Uterus (tissue), 4 donors: ENCODE measurements at regions of chr9 and their contacts with region 1.

Region 1: GRCh38 chr9:90099262-90099963 is 494.6 kb downstream of the GADD45G start:
- DNase-seq: no peak
- H3K4me3 ChIP-seq: no peak overlapping the region
- H3K27ac ChIP-seq: no peak overlapping the region
- H3K4me1 ChIP-seq: no peaks in the 10 kb centered on the region
- H3K27me3 ChIP-seq: no peaks in the 10 kb centered on the region
- CTCF ChIP-seq: peak; percentile 35 to 63 (median 52)
- POLR2A ChIP-seq: no peak

Region 2: DNA sequence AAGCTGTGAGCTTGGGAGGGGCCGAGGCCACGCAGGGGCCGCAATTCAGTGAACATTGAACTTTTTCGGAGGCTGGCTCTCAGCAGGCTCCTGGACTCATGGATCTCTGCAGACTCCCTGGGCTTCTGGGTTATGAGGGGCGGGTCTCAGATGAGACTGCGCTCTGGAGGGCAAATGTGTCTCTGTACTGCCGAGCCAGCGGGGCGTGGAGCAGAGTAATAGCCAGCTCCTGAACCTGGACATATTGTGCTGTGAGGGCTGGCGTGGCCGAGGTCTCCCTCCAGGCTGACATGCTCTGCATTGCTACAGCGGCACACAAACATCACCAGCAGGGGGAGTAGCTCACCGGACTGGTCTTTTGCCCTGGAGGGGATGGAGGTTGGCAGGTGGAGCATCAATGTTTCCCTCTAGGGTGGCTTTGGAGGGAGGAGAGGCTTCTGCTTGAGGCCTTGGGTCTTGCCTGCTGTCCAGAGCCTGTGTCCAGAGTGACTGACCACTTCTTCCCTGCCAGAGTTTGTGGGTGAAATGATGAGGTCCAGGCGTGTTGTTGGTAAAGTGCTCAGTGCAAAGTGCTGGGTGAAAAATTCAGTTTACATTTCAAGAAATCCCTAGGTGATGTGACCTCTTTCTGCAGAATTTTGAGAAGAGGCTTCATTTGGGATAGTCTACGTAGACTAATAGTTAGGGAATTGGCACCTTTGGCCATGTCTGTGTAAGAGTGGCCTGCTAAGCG is 505.6 kb before region 1 on chr9:
- intact Hi-C with region 1: loop called (anchors 5 kb)
- DNase-seq: no peak
- H3K4me3 ChIP-seq: no peak overlapping the region
- H3K27ac ChIP-seq: no peak overlapping the region
- H3K4me1 ChIP-seq: no peaks in the 10 kb centered on the region
- H3K27me3 ChIP-seq: no peaks in the 10 kb centered on the region
- CTCF ChIP-seq: peak in 1 of 4 experiments; percentile 16
- POLR2A ChIP-seq: no peak

Region 3: GRCh38 chr9:89602978-89603766 is 496.2 kb before region 1 on chr9:
- intact Hi-C with region 1: loop called (anchors 2 kb)
- DNase-seq: peak; percentile 90
- H3K4me3 ChIP-seq: peak overlapping the region; percentile 60 to 86
- H3K27ac ChIP-seq: peak overlapping the region; percentile 72 to 73
- H3K4me1 ChIP-seq: peaks cover 0 to 10% of the 10 kb centered on the region in 2 donors
- H3K27me3 ChIP-seq: no peaks in the 10 kb centered on the region
- CTCF ChIP-seq: peak; percentile 84 to 95 (median 89)
- POLR2A ChIP-seq: no peak

Region 4: GRCh38 chr9:89961616-89962341 is 137.6 kb before region 1 on chr9:
- intact Hi-C with region 1: no loop called
- DNase-seq: no peak
- H3K4me3 ChIP-seq: peak overlapping the region in 1 of 2 donors; percentile 19
- H3K27ac ChIP-seq: peak overlapping the region; percentile 42 to 45
- H3K4me1 ChIP-seq: no peaks in the 10 kb centered on the region
- H3K27me3 ChIP-seq: no peaks in the 10 kb centered on the region
- CTCF ChIP-seq: no peak
- POLR2A ChIP-seq: no peak